ENCODE measurements at regions of chr12 and their contacts with region 1.

Region 1: DNA sequence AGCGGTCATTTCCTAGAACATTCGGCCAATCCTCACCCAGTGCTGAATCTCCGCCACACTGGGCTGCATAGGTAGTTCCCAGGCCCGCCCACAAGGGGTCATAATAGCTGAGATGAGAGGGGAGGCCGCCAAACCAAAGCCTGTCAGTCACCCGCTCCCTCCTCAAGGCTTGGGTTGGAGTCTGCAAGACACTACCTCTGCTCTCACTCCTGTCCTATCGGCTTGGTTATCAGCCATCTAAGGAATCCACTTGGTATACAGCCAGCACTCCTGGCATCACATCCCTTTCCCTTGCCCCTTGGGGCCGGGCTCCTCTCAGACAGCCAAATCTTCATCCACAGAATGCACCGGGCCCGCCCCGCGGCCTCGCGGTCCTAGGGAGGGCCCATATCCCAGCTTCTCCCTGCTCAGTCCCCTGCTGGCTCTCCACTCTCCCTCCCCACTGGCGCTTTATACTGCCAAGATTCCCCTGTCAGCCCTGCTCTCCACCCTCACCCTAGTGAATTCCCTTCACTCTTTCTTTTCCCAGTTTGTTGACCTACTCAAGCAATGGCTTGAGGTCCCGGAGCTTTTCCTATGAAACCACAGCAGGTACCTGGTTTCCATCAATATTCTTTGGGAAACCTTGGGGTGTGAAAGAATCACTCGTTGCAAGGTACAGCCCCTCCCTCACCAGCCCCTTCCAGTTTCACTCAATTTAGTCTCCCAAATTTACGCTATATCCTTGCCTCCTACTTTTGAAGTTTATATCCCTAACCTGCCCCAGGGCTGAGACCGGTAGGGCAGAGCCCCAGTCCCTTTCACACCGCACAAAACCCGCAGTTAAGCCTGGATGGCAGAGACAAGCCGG is 1.4 kb downstream of the IFFO1 start:
- DNase-seq: peak; percentile 63 to 81 (median 73)
- ATAC-seq: peak; percentile 96
- H3K4me3 ChIP-seq: no peak overlapping the region
- H3K27ac ChIP-seq: no peak overlapping the region
- H3K4me1 ChIP-seq: peaks cover 2 to 36% of the 10 kb centered on the region in 2 experiments; a peak in 4 of 5 replicates
- H3K27me3 ChIP-seq: no peaks in the 10 kb centered on the region
- CTCF ChIP-seq: peak; percentile 66 to 77 (median 69)
- EP300 ChIP-seq: no peak
- POLR2A ChIP-seq: no peak
- RAD21 ChIP-seq: peak in 1 of 2 experiments; percentile 61; a peak in 2 of 4 replicates

Region 2: GRCh38 chr12:6540181-6540877 is 14.1 kb before region 1 on chr12:
- CTCF ChIA-PET with region 1: no interaction called
- POLR2A ChIA-PET with region 1: interaction called, 10 read pairs
- in situ Hi-C with region 1: no loop called
- intact Hi-C with region 1: no loop called
- DNase-seq: peak; percentile 60 to 81 (median 66)
- ATAC-seq: peak; percentile 70
- H3K4me3 ChIP-seq: peak overlapping the region; percentile 7
- H3K27ac ChIP-seq: peak overlapping the region; percentile 53; the same call in 1 of the 3 replicates
- H3K4me1 ChIP-seq: peaks cover 59 to 75% of the 10 kb centered on the region in 2 experiments
- H3K27me3 ChIP-seq: no peaks in the 10 kb centered on the region
- CTCF ChIP-seq: no peak
- EP300 ChIP-seq: no peak
- POLR2A ChIP-seq: no peak
- RAD21 ChIP-seq: no peak

Region 3: DNA sequence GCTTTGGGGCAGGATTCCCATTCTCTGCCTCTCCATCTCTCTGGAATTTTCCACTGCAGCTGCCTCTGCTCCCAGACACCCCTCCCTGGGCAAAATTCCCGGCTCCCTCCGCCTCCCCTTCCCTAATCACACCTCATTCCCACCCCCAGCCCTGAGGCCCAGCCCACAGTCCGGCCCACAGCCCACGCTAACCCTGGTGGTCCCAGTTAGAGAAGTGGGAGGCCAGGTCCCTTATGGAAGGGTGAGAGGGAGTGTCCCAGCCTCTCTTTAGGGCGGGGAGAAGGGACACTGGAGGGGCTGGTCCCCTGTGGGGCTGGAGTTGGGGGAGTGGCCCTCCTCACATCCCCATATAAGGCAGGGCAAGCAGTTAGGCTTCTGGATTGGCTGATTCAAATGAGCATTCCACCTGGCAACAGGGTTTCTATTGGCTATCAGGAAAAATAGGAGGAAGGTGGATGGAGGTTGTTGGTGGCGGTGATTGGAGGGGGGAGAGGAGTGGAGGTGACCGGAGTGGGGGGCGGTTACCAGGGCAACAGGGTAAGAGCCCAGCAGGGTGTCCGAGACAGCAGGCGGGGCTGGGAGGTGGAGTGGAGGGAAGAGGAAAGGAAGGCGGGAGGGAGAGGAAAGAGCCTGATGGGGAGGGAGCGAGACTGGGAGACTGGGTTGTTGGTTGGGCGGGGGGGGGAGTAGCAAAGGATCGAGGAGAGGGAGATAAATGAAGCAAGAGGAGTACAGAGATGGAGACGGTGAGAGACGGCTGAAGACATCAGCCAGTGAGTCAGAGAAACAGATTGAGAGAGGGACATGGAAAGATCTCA is 209.8 kb after region 1 on chr12:
- CTCF ChIA-PET with region 1: no interaction called
- POLR2A ChIA-PET with region 1: no interaction called
- in situ Hi-C with region 1: no loop called
- intact Hi-C with region 1: no loop called
- DNase-seq: peak; percentile 87 to 95 (median 90)
- ATAC-seq: peak; percentile 86
- H3K4me3 ChIP-seq: no peak overlapping the region
- H3K27ac ChIP-seq: peak overlapping the region; percentile 65
- H3K4me1 ChIP-seq: peaks cover 24 to 29% of the 10 kb centered on the region in 2 experiments; a peak in 4 of 5 replicates
- H3K27me3 ChIP-seq: no peaks in the 10 kb centered on the region
- CTCF ChIP-seq: no peak
- EP300 ChIP-seq: peak; percentile 33; the same call in 1 of the 2 replicates
- POLR2A ChIP-seq: no peak
- RAD21 ChIP-seq: no peak